K562 (cell line): ENCODE measurements at regions of chr6 and their contacts with region 1.

Region 1: GRCh38 chr6:166275714-166276166 is 32.5 kb downstream of the PRR18 start:
- DNase-seq: peak; percentile 79 to 88 (median 84)
- ATAC-seq: peak; percentile 98
- H3K4me3 ChIP-seq: no peak overlapping the region
- H3K27ac ChIP-seq: no peak overlapping the region
- H3K4me1 ChIP-seq: peaks cover 0 to 6% of the 10 kb centered on the region in 2 experiments; a peak in 1 of 5 replicates
- H3K27me3 ChIP-seq: peaks cover 12 to 53% of the 10 kb centered on the region in 2 experiments; a peak in 3 of 5 replicates
- CTCF ChIP-seq: peak; percentile 98 to 100 (median 100)
- EP300 ChIP-seq: no peak
- POLR2A ChIP-seq: no peak
- RAD21 ChIP-seq: peak; percentile 99

Region 2: GRCh38 chr6:166313255-166314070 is 37.7 kb after region 1 on chr6:
- CTCF ChIA-PET with region 1: interaction called, 3 read pairs
- POLR2A ChIA-PET with region 1: no interaction called
- in situ Hi-C with region 1: no loop called
- intact Hi-C with region 1: loop called (anchors 1 kb)
- DNase-seq: peak; percentile 79 to 85 (median 82)
- ATAC-seq: peak; percentile 92
- H3K4me3 ChIP-seq: no peak overlapping the region
- H3K27ac ChIP-seq: no peak overlapping the region
- H3K4me1 ChIP-seq: peaks cover 0 to 4% of the 10 kb centered on the region in 2 experiments; a peak in 2 of 5 replicates
- H3K27me3 ChIP-seq: peaks cover 13 to 22% of the 10 kb centered on the region in 2 experiments
- CTCF ChIP-seq: peak; percentile 88 to 90 (median 89)
- EP300 ChIP-seq: 0 out of 2 replicates have a peak, but pooled peaks have one; percentile 7
- POLR2A ChIP-seq: no peak
- RAD21 ChIP-seq: peak; percentile 77 to 89

Region 3: DNA sequence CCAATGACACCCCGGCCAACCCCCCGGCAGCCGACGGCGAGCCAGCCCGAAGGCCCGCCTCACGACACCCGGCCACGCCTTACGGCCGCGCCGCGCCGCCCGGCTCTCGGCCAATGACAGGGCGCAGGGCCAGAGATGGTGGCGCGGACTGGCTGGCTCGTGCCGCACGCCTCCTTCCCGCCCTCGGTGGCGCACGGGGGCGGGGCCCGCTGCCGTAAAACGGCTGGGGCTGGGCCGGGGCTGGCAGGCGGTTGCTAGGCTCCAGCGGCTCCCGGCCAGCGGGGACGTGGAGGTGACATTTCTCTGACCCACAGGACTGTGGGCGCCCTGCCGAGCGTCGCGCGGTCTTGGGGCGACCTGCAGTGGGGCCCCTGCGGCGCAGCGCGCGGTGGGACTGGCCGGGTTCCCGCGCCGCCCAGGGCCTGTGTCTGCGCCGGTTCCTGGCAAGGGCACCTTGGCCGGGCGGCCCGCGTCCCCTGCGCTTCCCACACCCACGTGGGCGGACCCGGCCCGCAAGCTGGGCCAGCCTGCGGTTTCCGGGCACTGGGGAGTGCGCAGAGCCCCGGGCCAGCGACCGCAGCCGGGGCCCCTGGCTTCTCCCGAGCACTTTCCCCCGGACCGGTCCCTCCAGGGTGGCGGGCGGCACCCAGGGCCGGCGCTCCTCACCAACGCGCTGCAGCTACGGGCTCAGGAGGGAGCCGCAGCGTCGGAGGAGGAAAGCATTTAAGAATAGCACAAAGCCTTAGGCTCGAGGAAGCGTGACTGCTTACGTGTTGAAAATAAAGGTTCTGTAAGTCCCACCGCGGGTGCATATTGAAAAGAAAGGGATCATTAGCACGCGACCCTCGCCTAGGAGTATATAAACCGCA is 107.4 kb after region 1 on chr6 and contains the start of gene MPC1:
- CTCF ChIA-PET with region 1: interaction called, 9 read pairs
- POLR2A ChIA-PET with region 1: interaction called, 3 read pairs
- in situ Hi-C with region 1: loop called (anchors 5 kb)
- intact Hi-C with region 1: loop called (anchors 5 kb)
- DNase-seq: peak; percentile 97 to 98 (median 98)
- ATAC-seq: peak; percentile 95
- H3K4me3 ChIP-seq: peak within 1 kb of the TSS; percentile 96
- H3K27ac ChIP-seq: peak within 1 kb of the TSS; percentile 76
- H3K4me1 ChIP-seq: peaks cover 3 to 20% of the 10 kb centered on the region in 2 experiments; a peak in 1 of 5 replicates
- H3K27me3 ChIP-seq: no peaks in the 10 kb centered on the region; a peak in 2 of 5 replicates
- CTCF ChIP-seq: no peak
- EP300 ChIP-seq: no peak
- POLR2A ChIP-seq: peak; percentile 87
- RAD21 ChIP-seq: no peak
- polyA plus RNA-seq, gene MPC1: 138 to 144 TPM

Region 4: GRCh38 chr6:166707045-166707444 is 431.3 kb after region 1 on chr6:
- CTCF ChIA-PET with region 1: no interaction called
- POLR2A ChIA-PET with region 1: no interaction called
- in situ Hi-C with region 1: no loop called
- intact Hi-C with region 1: loop called (anchors 10 kb)
- DNase-seq: peak in 2 of 4 experiments; percentile 30 to 33
- ATAC-seq: peak; percentile 94
- H3K4me3 ChIP-seq: no peak overlapping the region
- H3K27ac ChIP-seq: no peak overlapping the region
- H3K4me1 ChIP-seq: no peaks in the 10 kb centered on the region
- H3K27me3 ChIP-seq: peaks cover 7 to 33% of the 10 kb centered on the region in 2 experiments; a peak in 4 of 5 replicates
- CTCF ChIP-seq: peak; percentile 46 to 58 (median 52); a peak in 5 of 6 replicates
- EP300 ChIP-seq: no peak
- POLR2A ChIP-seq: no peak
- RAD21 ChIP-seq: peak in 1 of 2 experiments; percentile 45; a peak in 2 of 4 replicates